ENCODE measurements at regions of chr11 and their contacts with region 1.

Region 1: GRCh38 chr11:14643697-14644225 is at the start of gene PDE3B:
- DNase-seq: peak; percentile 62 to 83 (median 70)
- H3K4me3 ChIP-seq: peak within 1 kb of the TSS; percentile 79
- H3K4me3 Mint-ChIP-seq: peak within 1 kb of the TSS; percentile 88 to 96 (median 92)
- H3K27ac ChIP-seq: peak within 1 kb of the TSS; percentile 77
- H3K27ac Mint-ChIP-seq: peak within 1 kb of the TSS; percentile 80 to 94 (median 90)
- H3K4me1 ChIP-seq: peaks cover 40% of the 10 kb centered on the region
- H3K4me1 Mint-ChIP-seq: peaks cover 57 to 70% (median 57%) of the 10 kb centered on the region in 3 donors
- H3K27me3 ChIP-seq: no peaks in the 10 kb centered on the region
- H3K27me3 Mint-ChIP-seq: peaks cover 2 to 6% of the 10 kb centered on the region in 2 donors
- total RNA-seq, gene PDE3B: 47.0 to 47.2 TPM

Region 2: DNA sequence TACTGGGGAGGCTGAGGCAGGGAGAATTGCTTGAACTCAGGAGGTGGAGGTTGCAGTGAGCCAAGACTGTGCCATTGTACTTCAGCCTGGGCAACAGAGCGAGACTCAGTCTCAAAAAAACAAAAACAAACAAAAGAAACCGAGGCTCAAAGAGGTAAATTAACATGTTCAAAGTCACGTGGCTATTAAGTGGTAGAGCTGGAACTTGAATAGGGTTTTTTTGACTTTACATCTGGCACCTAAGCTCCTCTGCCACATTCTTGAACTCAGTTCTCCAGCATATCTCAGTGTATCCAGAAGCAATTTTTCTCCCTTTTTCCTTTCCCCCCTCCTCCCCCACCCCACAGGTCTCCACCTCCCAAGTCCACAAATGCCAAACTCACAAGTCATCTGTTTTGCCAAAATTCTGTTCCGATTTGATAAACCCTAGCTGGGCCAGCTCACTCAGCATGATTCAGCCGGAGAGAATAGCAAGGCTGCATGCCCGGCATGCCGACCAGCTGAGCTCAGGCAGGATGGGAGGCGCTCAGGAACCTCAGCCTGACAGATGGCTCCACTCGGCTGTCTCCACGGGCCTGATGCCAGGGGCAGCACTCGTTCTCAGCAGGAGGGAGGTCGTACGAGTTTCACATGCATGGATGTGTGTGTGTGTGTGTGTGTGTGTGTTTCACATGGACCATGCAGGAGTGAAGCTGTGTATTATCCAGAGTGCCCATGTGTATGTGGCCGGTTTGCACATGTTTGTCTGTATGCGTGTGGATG is 221.5 kb before region 1 on chr11:
- CTCF ChIA-PET with region 1: no interaction called
- POLR2A ChIA-PET with region 1: no interaction called
- DNase-seq: no peak
- H3K4me3 ChIP-seq: no peak overlapping the region
- H3K4me3 Mint-ChIP-seq: no peak overlapping the region
- H3K27ac ChIP-seq: no peak overlapping the region
- H3K27ac Mint-ChIP-seq: no peak overlapping the region
- H3K4me1 ChIP-seq: no peaks in the 10 kb centered on the region
- H3K4me1 Mint-ChIP-seq: peaks cover 5 to 9% (median 8%) of the 10 kb centered on the region in 3 donors
- H3K27me3 ChIP-seq: no peaks in the 10 kb centered on the region
- H3K27me3 Mint-ChIP-seq: no peaks in the 10 kb centered on the region

Region 3: GRCh38 chr11:14537134-14537599 is 106.6 kb before region 1 on chr11:
- CTCF ChIA-PET with region 1: interaction called, 18 read pairs
- POLR2A ChIA-PET with region 1: interaction called, 11 read pairs
- DNase-seq: peak in 3 of 5 donors; percentile 4 to 69 (median 54)
- H3K4me3 ChIP-seq: peak overlapping the region; percentile 51
- H3K4me3 Mint-ChIP-seq: peak overlapping the region; percentile 26 to 88 (median 63)
- H3K27ac ChIP-seq: no peak overlapping the region
- H3K27ac Mint-ChIP-seq: peak overlapping the region in 7 of 8 donors; percentile 25 to 95 (median 87)
- H3K4me1 ChIP-seq: no peaks in the 10 kb centered on the region
- H3K4me1 Mint-ChIP-seq: peaks cover 12 to 28% (median 28%) of the 10 kb centered on the region in 3 donors
- H3K27me3 ChIP-seq: no peaks in the 10 kb centered on the region
- H3K27me3 Mint-ChIP-seq: no peaks in the 10 kb centered on the region

Region 4: GRCh38 chr11:14566331-14567063 is 77.3 kb before region 1 on chr11:
- CTCF ChIA-PET with region 1: interaction called, 20 read pairs
- POLR2A ChIA-PET with region 1: no interaction called
- DNase-seq: no peak
- H3K4me3 ChIP-seq: no peak overlapping the region
- H3K4me3 Mint-ChIP-seq: peak overlapping the region in 2 of 7 donors; percentile 23 to 37
- H3K27ac ChIP-seq: no peak overlapping the region
- H3K27ac Mint-ChIP-seq: peak overlapping the region in 3 of 8 donors; percentile 11 to 82 (median 62)
- H3K4me1 ChIP-seq: peaks cover 22% of the 10 kb centered on the region
- H3K4me1 Mint-ChIP-seq: peaks cover 40 to 75% (median 71%) of the 10 kb centered on the region in 3 donors
- H3K27me3 ChIP-seq: no peaks in the 10 kb centered on the region
- H3K27me3 Mint-ChIP-seq: no peaks in the 10 kb centered on the region

Region 5: GRCh38 chr11:14619603-14620531 is 23.9 kb before region 1 on chr11:
- CTCF ChIA-PET with region 1: interaction called, 33 read pairs
- POLR2A ChIA-PET with region 1: interaction called, 5 read pairs
- DNase-seq: no peak
- H3K4me3 ChIP-seq: no peak overlapping the region
- H3K4me3 Mint-ChIP-seq: no peak overlapping the region
- H3K27ac ChIP-seq: no peak overlapping the region
- H3K27ac Mint-ChIP-seq: peak overlapping the region in 4 of 8 donors; percentile 23 to 78 (median 45)
- H3K4me1 ChIP-seq: peaks cover 9% of the 10 kb centered on the region
- H3K4me1 Mint-ChIP-seq: peaks cover 29 to 85% (median 46%) of the 10 kb centered on the region in 3 donors
- H3K27me3 ChIP-seq: no peaks in the 10 kb centered on the region
- H3K27me3 Mint-ChIP-seq: no peaks in the 10 kb centered on the region

Region 6: DNA sequence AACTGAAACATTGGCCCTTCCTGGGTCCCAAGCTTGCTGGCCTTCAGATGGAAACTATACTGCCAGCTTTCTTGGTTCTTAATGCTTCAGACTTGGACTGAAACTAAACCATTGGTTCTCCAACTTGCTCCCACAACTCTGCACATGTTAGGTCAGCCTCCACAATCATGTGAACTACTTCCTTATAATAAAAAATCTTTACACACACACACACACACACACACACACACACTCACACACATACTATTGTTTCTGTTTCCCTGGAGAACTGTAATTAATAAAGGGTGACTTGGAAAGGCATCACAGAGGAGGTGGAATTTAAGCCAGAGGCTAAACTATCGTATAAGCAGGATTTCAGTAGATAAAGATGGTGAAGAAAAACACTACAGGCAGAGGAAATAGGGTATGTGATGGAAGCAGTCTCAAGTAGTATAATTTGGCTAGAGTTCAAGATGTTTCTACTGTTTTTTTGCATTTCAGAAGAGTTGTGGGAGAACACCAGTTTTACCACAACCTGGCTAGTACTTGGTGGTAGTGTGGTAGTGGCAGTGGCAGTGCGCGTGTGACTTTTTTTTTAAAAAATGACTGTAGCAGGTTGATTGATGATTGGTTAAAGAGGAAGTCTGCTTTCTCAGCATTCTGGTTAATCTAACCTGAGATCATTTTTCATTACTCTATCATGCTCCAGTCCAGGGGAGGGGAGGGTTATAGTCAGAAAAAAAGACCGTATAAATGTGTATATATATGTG is 69.9 kb after region 1 on chr11:
- CTCF ChIA-PET with region 1: no interaction called
- POLR2A ChIA-PET with region 1: no interaction called
- DNase-seq: peak in 4 of 5 donors; percentile 1 to 77 (median 59)
- H3K4me3 ChIP-seq: peak overlapping the region; percentile 16
- H3K4me3 Mint-ChIP-seq: peak overlapping the region; percentile 21 to 64 (median 58)
- H3K27ac ChIP-seq: no peak overlapping the region
- H3K27ac Mint-ChIP-seq: peak overlapping the region; percentile 11 to 88 (median 64)
- H3K4me1 ChIP-seq: peaks cover 21% of the 10 kb centered on the region
- H3K4me1 Mint-ChIP-seq: peaks cover 37 to 60% (median 41%) of the 10 kb centered on the region in 3 donors
- H3K27me3 ChIP-seq: no peaks in the 10 kb centered on the region
- H3K27me3 Mint-ChIP-seq: no peaks in the 10 kb centered on the region

Region 7: DNA sequence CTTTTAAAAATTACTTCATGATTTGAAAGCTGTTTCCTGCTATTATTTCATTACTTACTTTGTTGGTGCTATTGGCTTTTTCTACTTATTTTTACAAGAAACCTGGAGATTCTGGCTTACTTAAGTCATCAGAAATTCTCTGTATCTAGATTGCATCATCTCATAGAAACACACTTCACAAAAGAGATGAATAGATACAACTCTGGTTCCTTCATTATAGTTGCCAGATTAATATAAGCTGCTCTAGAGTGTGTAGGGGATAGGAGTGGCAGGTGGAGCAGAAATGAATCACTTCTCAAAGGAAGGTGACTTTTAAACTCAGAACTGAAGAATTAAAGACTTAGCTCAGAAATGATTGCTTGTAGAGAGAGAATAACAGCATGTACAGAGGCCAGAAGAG is 228.3 kb after region 1 on chr11:
- CTCF ChIA-PET with region 1: no interaction called
- POLR2A ChIA-PET with region 1: interaction called, 10 read pairs
- DNase-seq: no peak
- H3K4me3 ChIP-seq: no peak overlapping the region
- H3K4me3 Mint-ChIP-seq: no peak overlapping the region
- H3K27ac ChIP-seq: no peak overlapping the region
- H3K27ac Mint-ChIP-seq: peak overlapping the region in 1 of 8 donors; percentile 14
- H3K4me1 ChIP-seq: no peaks in the 10 kb centered on the region
- H3K4me1 Mint-ChIP-seq: peaks cover 0 to 14% (median 4%) of the 10 kb centered on the region in 3 donors
- H3K27me3 ChIP-seq: no peaks in the 10 kb centered on the region
- H3K27me3 Mint-ChIP-seq: no peaks in the 10 kb centered on the region

Region 8: DNA sequence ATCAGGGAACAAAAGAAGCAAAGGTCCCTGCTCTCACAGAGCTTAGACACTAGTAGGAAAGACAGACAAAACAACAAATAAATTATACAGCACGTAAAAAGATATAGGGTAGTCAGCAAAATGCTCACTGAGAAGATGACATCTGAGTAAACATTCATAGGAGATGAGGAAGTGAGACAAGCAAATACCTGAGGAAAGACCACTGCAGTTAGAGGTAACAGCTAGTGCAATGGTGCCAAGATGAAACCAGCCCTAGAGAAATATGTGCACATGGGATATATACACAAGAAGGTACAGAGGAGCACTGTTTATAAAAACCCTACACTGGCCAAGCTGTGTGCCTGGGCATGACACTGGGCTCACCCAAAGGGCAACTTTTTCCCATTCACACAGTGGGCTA is 238.4 kb after region 1 on chr11:
- CTCF ChIA-PET with region 1: no interaction called
- POLR2A ChIA-PET with region 1: no interaction called
- DNase-seq: no peak
- H3K4me3 ChIP-seq: no peak overlapping the region
- H3K4me3 Mint-ChIP-seq: no peak overlapping the region
- H3K27ac ChIP-seq: no peak overlapping the region
- H3K27ac Mint-ChIP-seq: peak overlapping the region in 2 of 8 donors; percentile 14 to 36
- H3K4me1 ChIP-seq: peaks cover 3% of the 10 kb centered on the region
- H3K4me1 Mint-ChIP-seq: peaks cover 4 to 32% (median 18%) of the 10 kb centered on the region in 3 donors
- H3K27me3 ChIP-seq: no peaks in the 10 kb centered on the region
- H3K27me3 Mint-ChIP-seq: no peaks in the 10 kb centered on the region